A673 (cell line): ENCODE measurements at regions of chr5 and their contacts with region 1.

Region 1: DNA sequence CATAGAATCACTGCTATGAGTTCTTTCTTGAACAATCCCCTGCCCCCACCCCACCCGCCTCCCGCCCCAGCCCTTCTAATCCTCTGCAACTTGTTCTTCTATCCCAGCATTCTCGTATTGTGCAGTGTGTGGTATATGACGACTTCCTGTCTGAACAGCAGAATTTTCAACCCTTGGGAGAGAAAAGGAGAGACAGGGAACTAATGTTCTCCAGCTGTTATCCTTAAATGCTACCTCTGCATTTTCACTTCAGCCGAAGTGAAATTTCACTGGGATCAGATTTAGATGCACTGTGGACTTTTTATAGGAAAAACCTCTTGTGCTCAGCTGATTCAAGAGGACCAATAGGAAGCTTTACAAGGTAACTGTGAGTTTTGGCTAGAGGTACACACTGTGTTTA is 2.2 kb downstream of the FBXL7 start:
- DNase-seq: peak; percentile 22
- H3K4me3 ChIP-seq: peak overlapping the region; percentile 56
- H3K27ac ChIP-seq: no peak overlapping the region
- H3K4me1 ChIP-seq: no peaks in the 10 kb centered on the region
- H3K27me3 ChIP-seq: peaks cover 15% of the 10 kb centered on the region
- CTCF ChIP-seq: no peak

Region 2: DNA sequence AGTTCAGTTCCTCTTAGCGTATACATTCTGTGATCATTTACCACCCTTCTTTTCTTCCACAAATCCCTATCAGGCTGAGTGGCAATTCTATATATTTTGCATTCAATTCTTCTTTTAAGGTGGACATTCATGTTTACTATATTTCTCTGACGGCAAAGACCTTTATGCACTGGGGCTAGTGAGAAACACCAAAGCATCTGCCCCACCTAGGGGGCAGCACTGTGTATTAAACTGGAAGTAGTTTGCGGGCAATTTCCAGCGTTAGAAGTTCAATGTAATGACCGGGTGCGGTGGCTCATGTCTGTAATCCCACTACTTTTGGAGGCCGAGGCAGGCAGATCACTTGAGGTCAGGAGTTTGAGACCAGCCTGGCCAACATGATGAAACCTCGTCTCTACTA is 30.1 kb before region 1 on chr5:
- CTCF ChIA-PET with region 1: no interaction called
- POLR2A ChIA-PET with region 1: interaction called, 11 read pairs
- intact Hi-C with region 1: no loop called
- DNase-seq: no peak
- H3K4me3 ChIP-seq: no peak overlapping the region
- H3K27ac ChIP-seq: no peak overlapping the region
- H3K4me1 ChIP-seq: no peaks in the 10 kb centered on the region
- H3K27me3 ChIP-seq: no peaks in the 10 kb centered on the region
- CTCF ChIP-seq: 0 out of 2 replicates have a peak, but pooled peaks have one; percentile 11

Region 3: DNA sequence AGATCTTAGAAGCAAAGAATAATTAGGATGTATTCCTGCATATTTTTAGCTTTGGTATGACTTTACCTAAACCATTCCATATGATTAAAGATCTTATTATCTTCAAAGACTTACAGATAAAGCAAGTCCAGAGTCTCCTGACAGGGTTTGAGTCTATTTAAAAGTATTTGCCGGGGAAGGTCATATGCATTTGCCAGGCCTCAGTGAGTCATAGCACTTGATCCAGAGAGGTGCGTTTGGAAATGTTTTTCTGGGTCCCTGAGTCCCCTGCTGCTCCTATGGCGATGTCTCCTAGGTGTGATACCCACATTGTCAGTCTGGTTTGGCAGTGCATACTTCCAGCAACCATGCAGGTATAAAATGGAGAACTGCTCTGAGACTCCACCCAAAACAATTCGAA is 214.8 kb after region 1 on chr5:
- CTCF ChIA-PET with region 1: no interaction called
- POLR2A ChIA-PET with region 1: no interaction called
- intact Hi-C with region 1: no loop called
- DNase-seq: no peak
- H3K4me3 ChIP-seq: no peak overlapping the region
- H3K27ac ChIP-seq: no peak overlapping the region
- H3K4me1 ChIP-seq: no peaks in the 10 kb centered on the region
- H3K27me3 ChIP-seq: no peaks in the 10 kb centered on the region
- CTCF ChIP-seq: no peak